Right ventricle myocardium inferior (tissue), 1 donor: ENCODE measurements at regions of chr17 and their contacts with region 1.

Region 1: DNA sequence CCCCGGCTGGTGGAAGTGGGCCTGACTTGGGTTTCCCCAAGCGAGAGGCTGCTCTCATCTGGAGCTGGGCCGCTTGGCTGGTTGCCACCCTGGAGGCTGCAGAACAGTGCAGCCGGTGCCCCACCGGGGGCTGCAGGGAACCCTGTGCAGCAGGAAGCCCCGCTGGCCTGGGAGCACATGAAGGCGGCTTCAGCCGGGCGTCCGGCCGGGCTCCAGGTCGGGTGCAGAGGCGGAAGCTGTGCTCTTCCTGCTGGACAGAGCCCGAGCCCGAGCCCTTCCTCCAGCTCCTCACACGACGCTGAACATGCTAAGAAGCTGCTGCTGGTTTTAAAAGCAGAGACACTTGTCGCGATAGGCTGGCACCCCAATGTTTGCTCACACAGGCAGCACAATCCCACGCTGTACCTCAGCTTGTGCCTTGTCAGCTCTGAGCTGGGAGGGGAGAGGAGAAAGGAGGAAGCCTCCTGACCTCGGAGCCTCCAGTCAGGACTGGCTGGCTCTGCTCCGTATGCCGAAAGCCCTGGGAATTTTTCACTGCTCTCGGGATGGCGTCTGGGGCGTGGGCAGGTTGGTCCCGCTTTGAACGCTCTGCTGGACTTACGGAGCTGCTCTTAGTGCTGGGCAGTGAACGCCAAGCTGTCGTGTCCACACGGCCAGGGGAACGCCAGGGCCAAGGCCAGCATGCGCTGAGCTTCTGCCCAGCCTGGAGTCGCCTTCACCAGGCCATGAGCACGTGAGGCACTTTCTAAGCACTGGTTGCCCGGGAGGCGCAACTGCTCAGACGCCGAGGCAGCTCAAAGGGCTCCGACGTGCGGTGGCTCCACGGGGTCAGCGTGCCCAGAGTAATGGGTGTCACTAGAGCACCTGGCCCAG is 8.8 kb downstream of the CDK5R1 start:
- DNase-seq: peak; percentile 79
- ATAC-seq: peak; percentile 49

Region 2: GRCh38 chr17:32609085-32609484 is 113.5 kb after region 1 on chr17:
- intact Hi-C with region 1: loop called (anchors 5 kb)
- DNase-seq: peak; percentile 80
- ATAC-seq: peak; percentile 48